Common myeloid progenitor, CD34-positive (primary cell): ENCODE measurements at regions of chr15 and their contacts with region 1.

Region 1: DNA sequence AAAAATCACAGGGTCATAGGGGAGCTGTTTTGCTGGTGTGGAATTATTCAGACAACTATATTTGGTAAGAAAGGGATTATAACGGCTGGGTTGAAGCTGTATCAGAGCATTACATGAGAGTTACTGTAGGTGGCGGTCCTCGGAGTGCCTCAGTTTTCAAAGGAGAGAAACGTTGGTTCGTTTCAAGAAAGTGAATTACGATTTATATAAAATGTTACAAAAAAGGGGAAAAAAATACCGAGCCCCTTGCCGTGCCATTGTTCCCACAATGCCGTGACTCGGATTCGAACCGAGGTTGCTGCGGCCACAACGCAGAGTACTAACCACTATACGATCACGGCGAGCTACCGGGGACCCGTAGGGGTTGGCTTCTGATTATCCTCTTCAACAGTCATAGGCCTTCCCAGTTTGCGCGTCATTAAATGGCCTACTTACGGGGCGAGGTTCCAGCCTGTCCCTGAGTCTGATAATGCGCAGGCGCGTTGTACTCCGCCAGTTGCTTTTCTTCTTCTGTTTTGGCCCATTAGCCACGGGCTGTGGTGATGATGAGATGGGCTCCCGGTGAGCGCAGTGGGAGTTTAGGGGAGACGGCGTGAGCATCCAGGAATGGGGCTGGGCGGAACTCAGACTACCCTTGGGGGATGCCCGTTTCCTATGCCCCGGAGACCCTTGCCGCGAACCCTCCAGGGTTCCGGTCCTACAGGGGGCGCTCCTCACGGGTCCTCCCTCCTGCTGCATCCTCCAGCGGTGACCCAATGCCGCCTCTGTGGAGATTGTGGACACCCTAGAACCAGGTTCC is 10.8 kb upstream of the SHF start:
- DNase-seq: peak; percentile 96 to 99 (median 98)
- H3K4me3 ChIP-seq: peak overlapping the region; percentile 50 to 90 (median 83)
- H3K27ac ChIP-seq: peak overlapping the region; percentile 46 to 94
- H3K4me1 ChIP-seq: peaks cover 4 to 30% (median 27%) of the 10 kb centered on the region in 4 experiments
- H3K27me3 ChIP-seq: no peaks in the 10 kb centered on the region

Region 2: DNA sequence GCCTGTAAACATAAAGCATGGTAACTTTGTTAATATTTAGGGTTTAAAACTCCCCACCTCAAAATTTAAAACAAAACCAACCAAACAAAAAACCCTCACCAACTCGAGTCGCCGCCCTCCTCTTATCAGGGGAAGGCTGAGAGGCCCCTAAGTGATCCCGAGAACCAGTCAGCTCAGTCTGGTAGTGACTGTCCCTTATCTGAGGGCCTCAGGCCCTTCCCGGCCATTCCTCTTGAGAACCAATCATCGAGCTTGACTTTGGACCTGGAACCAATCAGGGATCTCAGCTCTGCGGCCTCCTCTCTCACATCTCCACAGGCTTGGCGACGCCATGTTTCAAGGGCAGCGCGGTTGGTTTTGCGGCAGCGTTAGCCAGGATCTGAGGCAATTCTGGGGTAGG is 242.1 kb before region 1 on chr15 and contains the start of gene TERB2:
- CTCF ChIA-PET with region 1: no interaction called
- POLR2A ChIA-PET with region 1: no interaction called
- DNase-seq: no peak
- H3K4me3 ChIP-seq: no peak within 1 kb of the TSS
- H3K27ac ChIP-seq: no peak within 1 kb of the TSS
- H3K4me1 ChIP-seq: no peaks in the 10 kb centered on the region
- H3K27me3 ChIP-seq: no peaks in the 10 kb centered on the region

Region 3: DNA sequence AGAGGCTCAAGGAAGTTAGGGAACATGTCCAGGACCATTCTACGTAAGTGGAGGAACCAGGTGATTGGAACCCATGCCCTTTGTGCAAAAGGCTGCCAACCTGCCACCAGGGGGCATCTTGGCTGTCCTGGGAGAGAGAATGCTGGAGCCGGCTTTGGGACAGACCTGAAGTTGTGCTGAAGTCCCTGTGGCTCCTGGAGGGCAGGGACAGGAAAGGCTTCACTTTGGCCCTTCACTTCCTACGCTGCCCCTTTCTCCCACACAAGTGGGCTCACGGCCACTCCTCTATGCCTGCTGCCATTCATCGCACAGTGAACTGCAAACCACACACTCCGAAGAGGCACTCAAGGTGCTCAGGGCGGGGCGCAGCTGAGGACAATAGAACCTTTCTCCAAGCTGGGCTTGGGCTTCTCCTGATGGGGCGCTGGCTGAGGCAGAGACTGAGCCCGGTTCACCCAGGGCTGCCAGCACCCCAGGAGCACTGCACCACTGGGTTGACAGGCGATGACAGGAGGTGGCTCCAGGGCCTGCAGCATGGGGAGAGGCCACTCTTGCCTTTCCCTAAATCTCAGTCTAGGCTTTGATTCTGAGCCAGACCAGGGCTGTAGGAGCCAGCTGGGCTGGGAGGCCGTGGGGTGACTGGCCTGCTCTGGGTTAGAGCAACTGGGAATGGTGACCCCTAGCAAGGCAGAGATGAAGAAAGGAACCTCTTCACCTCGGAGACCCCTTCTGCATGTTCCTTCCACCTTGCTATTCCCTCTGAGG is 19.1 kb before region 1 on chr15:
- CTCF ChIA-PET with region 1: interaction called, 10 read pairs
- POLR2A ChIA-PET with region 1: interaction called, 4 read pairs
- DNase-seq: no peak
- H3K4me3 ChIP-seq: peak overlapping the region in 1 of 7 experiments; percentile 17
- H3K27ac ChIP-seq: no peak overlapping the region
- H3K4me1 ChIP-seq: peaks cover 17 to 57% (median 57%) of the 10 kb centered on the region in 4 experiments
- H3K27me3 ChIP-seq: no peaks in the 10 kb centered on the region

Region 4: DNA sequence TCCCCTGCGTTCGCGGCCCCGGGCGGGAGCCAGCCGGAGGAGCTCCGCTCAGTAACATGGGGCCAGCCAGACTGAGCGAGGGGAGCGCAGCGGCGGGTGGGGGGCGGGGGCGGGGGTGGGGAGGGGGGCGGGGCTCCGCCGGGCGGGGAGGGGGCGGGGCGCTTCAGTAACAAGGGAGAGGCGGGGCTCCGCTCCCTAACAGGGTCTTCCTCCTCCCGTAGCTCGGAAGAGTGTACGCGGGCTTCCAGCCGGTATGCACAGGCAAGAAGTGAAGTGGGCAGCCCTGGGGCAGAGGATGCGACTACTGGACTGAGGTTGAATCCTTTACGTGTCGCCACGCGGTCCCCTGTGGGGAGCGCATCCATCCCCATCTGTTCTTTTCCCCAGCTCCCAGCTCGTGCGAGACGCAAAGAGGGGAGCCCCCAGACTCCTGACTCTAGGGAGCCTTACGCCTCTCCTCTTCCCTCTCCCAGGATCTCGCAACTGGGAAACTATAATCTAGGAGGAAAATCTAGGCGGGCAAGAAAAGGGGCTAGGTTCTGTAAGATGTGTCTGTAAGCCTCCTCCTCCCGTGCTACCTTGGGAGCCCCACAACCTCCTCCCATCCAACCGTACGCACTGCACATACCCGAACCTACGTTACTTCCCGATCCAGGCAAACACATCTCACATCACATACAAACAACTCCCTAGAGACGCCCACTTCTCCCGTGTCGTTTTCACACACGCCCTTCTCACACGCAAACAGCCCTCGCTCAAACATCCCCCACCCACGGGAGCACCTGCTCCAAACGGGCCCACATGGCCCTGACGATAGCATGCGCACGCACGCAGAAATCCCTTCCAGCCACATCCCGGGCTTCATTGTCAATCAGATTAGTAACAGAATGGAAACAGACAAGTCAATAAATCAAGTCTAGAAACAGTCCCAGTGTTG is 10.4 kb before region 1 on chr15 and contains the start of gene SHF:
- CTCF ChIA-PET with region 1: interaction called, 33 read pairs
- POLR2A ChIA-PET with region 1: interaction called, 9 read pairs
- DNase-seq: peak; percentile 75 to 85 (median 85)
- H3K4me3 ChIP-seq: peak within 1 kb of the TSS; percentile 64 to 98 (median 82)
- H3K27ac ChIP-seq: peak within 1 kb of the TSS; percentile 75 to 85
- H3K4me1 ChIP-seq: peaks cover 0 to 49% (median 48%) of the 10 kb centered on the region in 4 experiments
- H3K27me3 ChIP-seq: no peaks in the 10 kb centered on the region